CD8-positive, alpha-beta memory T cell (primary cell): ENCODE measurements at regions of chr12 and their contacts with region 1.

Region 1: DNA sequence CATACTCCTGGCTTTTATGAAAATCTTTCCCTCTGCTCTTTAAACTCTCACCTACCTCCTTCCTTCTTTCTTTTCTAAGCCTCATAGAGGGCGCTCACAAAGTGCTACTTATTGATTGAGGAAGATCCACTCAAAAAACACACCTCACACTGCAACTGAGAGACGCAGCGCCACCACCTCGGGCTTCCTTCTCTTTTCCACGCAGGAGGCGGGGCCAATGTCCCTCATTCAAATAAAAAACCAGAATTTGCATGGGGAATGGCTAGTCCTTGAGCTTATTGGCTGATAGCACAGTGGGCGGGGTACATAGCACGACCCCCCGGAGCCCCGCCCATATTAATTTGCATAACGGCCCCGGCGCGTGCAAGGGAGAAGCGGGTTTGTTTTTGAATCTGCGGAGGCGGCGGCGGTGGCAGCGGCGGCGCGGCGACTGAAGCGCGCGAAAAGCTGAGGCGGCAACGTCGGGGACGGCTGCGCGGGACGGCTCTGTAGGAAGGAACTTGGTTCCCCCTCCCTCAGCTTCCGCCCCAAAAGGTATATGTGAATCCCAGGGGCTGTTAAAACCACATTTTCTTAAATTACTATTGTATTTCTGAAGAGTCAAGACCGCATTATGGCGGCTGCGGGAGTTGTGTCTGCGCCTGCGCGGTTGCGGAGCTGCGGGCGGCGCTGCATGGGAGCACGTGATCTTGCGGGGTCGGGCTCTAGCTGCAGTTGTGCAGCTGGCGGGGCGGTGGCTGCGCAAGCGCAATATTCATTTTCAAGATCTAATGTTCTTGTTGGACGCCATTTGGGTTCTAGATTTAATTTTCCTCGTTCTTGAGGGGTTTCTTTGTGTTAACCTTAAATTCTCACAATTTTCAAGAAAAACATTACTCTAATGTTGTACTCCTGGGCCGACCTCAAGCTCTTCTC is at the start of gene ATF7IP:
- DNase-seq: peak; percentile 90 to 98 (median 96)
- H3K4me3 ChIP-seq: peak within 1 kb of the TSS; percentile 76
- H3K4me3 Mint-ChIP-seq: peak within 1 kb of the TSS; percentile 85 to 94 (median 88)
- H3K27ac ChIP-seq: peak within 1 kb of the TSS; percentile 79
- H3K27ac Mint-ChIP-seq: peak within 1 kb of the TSS; percentile 88 to 98 (median 94)
- H3K4me1 ChIP-seq: peaks cover 36% of the 10 kb centered on the region
- H3K4me1 Mint-ChIP-seq: peaks cover 38 to 57% (median 56%) of the 10 kb centered on the region in 3 donors
- H3K27me3 ChIP-seq: no peaks in the 10 kb centered on the region
- H3K27me3 Mint-ChIP-seq: peaks cover 0 to 4% of the 10 kb centered on the region in 2 donors
- total RNA-seq, gene ATF7IP: 84.4 to 94.4 TPM

Region 2: DNA sequence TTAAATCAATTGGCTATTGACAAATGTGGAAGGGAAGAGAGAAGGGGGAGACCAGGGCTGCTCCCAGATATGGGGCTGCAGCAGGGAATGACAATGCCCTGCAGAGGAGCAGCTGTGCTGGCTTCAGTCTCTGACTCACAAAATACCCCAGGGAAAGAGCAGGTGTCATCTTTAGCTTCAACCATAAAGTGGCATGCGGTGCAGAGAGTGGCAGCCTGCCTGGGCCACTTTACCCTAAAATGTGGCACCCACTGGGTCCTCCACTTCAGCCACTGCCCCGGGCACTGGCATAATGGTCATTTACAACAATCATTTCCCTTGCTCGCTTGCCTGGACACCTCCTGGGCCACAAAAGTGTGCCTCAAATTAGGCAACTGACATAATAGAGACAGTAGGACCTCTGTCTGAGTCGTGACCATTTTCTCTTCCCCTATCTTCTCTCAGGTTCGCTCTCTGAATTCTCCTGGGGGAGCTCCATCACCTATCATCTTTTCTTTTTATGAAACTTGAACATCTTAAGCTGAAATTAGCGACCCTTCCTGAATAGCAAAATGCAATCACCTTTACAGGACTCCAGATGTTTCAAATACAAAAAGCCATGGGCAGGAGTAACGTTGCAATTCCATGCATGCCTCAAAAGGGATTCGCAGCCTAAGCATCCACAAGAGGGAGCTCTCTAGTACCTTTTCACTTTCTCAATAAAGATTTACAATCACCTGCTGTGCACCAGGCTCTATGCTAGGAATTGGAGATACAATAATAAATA is 179.9 kb before region 1 on chr12:
- CTCF ChIA-PET with region 1: no interaction called
- POLR2A ChIA-PET with region 1: no interaction called
- DNase-seq: peak in 3 of 5 donors; percentile 1 to 8 (median 6)
- H3K4me3 ChIP-seq: no peak overlapping the region
- H3K4me3 Mint-ChIP-seq: no peak overlapping the region
- H3K27ac ChIP-seq: no peak overlapping the region
- H3K27ac Mint-ChIP-seq: no peak overlapping the region
- H3K4me1 ChIP-seq: no peaks in the 10 kb centered on the region
- H3K4me1 Mint-ChIP-seq: peaks cover 0 to 3% (median 2%) of the 10 kb centered on the region in 3 donors
- H3K27me3 ChIP-seq: no peaks in the 10 kb centered on the region
- H3K27me3 Mint-ChIP-seq: peaks cover 5 to 30% of the 10 kb centered on the region in 2 donors

Region 3: DNA sequence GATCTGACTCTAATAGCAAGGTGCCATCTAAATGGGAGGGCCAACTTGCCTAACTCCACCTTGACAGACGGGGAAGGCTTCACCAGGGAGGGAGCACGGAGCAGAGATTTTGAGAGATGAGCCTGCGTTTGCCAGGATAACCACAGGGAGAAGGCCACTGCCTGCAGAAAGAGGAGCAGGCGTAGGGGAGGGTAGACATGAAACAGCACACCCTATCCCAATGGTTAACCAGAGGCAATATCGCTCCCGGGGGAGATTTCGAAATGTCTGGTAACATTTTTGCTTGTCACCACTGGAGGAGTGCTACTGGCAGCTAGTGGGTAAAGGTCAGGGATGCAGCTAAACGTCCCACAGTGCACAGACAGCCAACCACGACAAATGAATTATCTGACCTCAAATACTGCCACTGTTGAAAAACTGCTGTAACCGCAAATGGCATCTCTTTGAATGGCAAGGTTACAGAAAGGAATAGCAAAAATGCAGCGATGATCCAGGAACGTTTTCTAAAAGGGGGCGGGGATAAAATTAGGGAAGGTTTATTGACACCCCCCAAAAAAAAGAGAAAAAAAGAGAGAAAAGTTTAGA is 126.1 kb before region 1 on chr12:
- CTCF ChIA-PET with region 1: interaction called, 32 read pairs
- POLR2A ChIA-PET with region 1: interaction called, 12 read pairs
- DNase-seq: peak in 2 of 5 donors; percentile 9 to 51
- H3K4me3 ChIP-seq: peak overlapping the region; percentile 9
- H3K4me3 Mint-ChIP-seq: peak overlapping the region; percentile 53 to 86 (median 80)
- H3K27ac ChIP-seq: no peak overlapping the region
- H3K27ac Mint-ChIP-seq: peak overlapping the region in 6 of 8 donors; percentile 11 to 88 (median 72)
- H3K4me1 ChIP-seq: peaks cover 16% of the 10 kb centered on the region
- H3K4me1 Mint-ChIP-seq: peaks cover 21 to 23% (median 21%) of the 10 kb centered on the region in 3 donors
- H3K27me3 ChIP-seq: no peaks in the 10 kb centered on the region
- H3K27me3 Mint-ChIP-seq: no peaks in the 10 kb centered on the region

Region 4: GRCh38 chr12:14384783-14385638 is 19.5 kb after region 1 on chr12:
- CTCF ChIA-PET with region 1: interaction called, 67 read pairs
- POLR2A ChIA-PET with region 1: interaction called, 84 read pairs
- DNase-seq: peak in 4 of 5 donors; percentile 53 to 81 (median 78)
- H3K4me3 ChIP-seq: peak overlapping the region; percentile 52
- H3K4me3 Mint-ChIP-seq: peak overlapping the region; percentile 78 to 89 (median 85)
- H3K27ac ChIP-seq: peak overlapping the region; percentile 68
- H3K27ac Mint-ChIP-seq: peak overlapping the region; percentile 88 to 96 (median 94)
- H3K4me1 ChIP-seq: peaks cover 67% of the 10 kb centered on the region
- H3K4me1 Mint-ChIP-seq: peaks cover 51 to 79% (median 67%) of the 10 kb centered on the region in 3 donors
- H3K27me3 ChIP-seq: no peaks in the 10 kb centered on the region
- H3K27me3 Mint-ChIP-seq: no peaks in the 10 kb centered on the region

Region 5: GRCh38 chr12:14403711-14404196 is 38.2 kb after region 1 on chr12:
- CTCF ChIA-PET with region 1: interaction called, 18 read pairs
- POLR2A ChIA-PET with region 1: interaction called, 30 read pairs
- DNase-seq: peak in 3 of 5 donors; percentile 60 to 69 (median 61)
- H3K4me3 ChIP-seq: no peak overlapping the region
- H3K4me3 Mint-ChIP-seq: peak overlapping the region; percentile 70 to 86 (median 78)
- H3K27ac ChIP-seq: peak overlapping the region; percentile 13
- H3K27ac Mint-ChIP-seq: peak overlapping the region; percentile 87 to 98 (median 94)
- H3K4me1 ChIP-seq: peaks cover 94% of the 10 kb centered on the region
- H3K4me1 Mint-ChIP-seq: peaks cover 75 to 91% (median 86%) of the 10 kb centered on the region in 3 donors
- H3K27me3 ChIP-seq: no peaks in the 10 kb centered on the region
- H3K27me3 Mint-ChIP-seq: no peaks in the 10 kb centered on the region

Region 6: DNA sequence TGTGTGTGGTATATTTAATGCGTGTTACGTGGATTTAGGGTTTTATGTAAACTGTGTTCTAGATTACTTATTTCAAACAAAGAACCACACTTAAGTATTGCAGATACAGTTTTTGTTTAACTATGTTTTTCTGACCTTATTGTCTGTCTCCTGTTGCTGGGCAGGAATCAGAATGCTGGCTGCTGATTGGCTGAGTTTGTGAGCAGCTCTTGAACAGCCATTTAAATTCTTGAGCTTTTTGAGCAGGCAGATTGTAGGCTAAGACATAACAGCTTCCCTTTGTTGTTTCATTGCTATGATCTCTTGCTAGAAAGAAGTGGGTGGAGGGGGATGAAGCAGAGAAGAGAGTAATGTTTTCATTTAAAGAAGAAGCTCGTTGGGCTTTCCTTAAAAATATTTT is 52.2 kb after region 1 on chr12:
- CTCF ChIA-PET with region 1: interaction called, 64 read pairs
- POLR2A ChIA-PET with region 1: interaction called, 47 read pairs
- DNase-seq: peak; percentile 51 to 85 (median 69)
- H3K4me3 ChIP-seq: no peak overlapping the region
- H3K4me3 Mint-ChIP-seq: peak overlapping the region; percentile 50 to 88 (median 85)
- H3K27ac ChIP-seq: no peak overlapping the region
- H3K27ac Mint-ChIP-seq: peak overlapping the region; percentile 23 to 97 (median 89)
- H3K4me1 ChIP-seq: peaks cover 63% of the 10 kb centered on the region
- H3K4me1 Mint-ChIP-seq: peaks cover 65 to 88% (median 84%) of the 10 kb centered on the region in 3 donors
- H3K27me3 ChIP-seq: no peaks in the 10 kb centered on the region
- H3K27me3 Mint-ChIP-seq: no peaks in the 10 kb centered on the region

Region 7: GRCh38 chr12:14495326-14495725 is 129.8 kb after region 1 on chr12:
- CTCF ChIA-PET with region 1: no interaction called
- POLR2A ChIA-PET with region 1: no interaction called
- DNase-seq: no peak
- H3K4me3 ChIP-seq: no peak overlapping the region
- H3K4me3 Mint-ChIP-seq: no peak overlapping the region
- H3K27ac ChIP-seq: no peak overlapping the region
- H3K27ac Mint-ChIP-seq: peak overlapping the region in 5 of 8 donors; percentile 37 to 73 (median 45)
- H3K4me1 ChIP-seq: no peaks in the 10 kb centered on the region
- H3K4me1 Mint-ChIP-seq: peaks cover 0 to 16% (median 11%) of the 10 kb centered on the region in 3 donors
- H3K27me3 ChIP-seq: no peaks in the 10 kb centered on the region
- H3K27me3 Mint-ChIP-seq: peaks cover 0 to 1% of the 10 kb centered on the region in 2 donors

Region 8: DNA sequence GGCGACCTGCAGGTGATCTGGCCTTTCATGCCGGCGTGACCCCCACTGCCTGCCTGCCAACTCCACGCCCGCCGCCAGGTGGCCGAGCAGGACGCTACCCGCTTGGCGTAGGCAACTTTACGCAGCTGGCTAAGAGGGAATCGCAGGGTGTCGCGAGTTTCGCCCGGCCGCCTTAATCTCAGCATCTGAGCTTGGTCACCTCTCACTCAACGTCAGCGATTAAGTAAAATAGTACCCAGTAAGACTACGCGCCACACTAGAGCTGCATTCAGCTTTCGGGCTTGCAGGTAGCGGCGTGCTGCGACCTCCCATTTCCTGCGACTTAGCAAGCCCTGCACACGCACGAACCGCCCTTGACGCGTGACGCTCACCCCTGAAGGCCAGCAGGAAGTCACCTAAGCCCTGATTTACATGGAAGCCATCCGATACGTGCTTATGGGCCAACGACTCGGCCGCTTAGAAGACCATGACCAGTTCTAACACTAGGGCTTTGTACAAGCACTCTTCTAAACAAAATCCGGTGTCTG is 404.5 kb after region 1 on chr12:
- CTCF ChIA-PET with region 1: interaction called, 8 read pairs
- POLR2A ChIA-PET with region 1: interaction called, 26 read pairs
- DNase-seq: peak; percentile 85 to 91 (median 89)
- H3K4me3 ChIP-seq: peak overlapping the region; percentile 95
- H3K4me3 Mint-ChIP-seq: peak overlapping the region; percentile 94 to 100 (median 98)
- H3K27ac ChIP-seq: peak overlapping the region; percentile 99
- H3K27ac Mint-ChIP-seq: peak overlapping the region; percentile 99 to 100 (median 100)
- H3K4me1 ChIP-seq: peaks cover 43% of the 10 kb centered on the region
- H3K4me1 Mint-ChIP-seq: peaks cover 59 to 80% (median 68%) of the 10 kb centered on the region in 3 donors
- H3K27me3 ChIP-seq: no peaks in the 10 kb centered on the region
- H3K27me3 Mint-ChIP-seq: peaks cover 0 to 15% of the 10 kb centered on the region in 2 donors